ENCODE measurements at regions of chr11 and their contacts with region 1.

Region 1: GRCh38 chr11:31022080-31022479 is 347.5 kb downstream of the DCDC1 start:
- DNase-seq: no peak
- H3K4me3 Mint-ChIP-seq: no peak overlapping the region
- H3K27ac Mint-ChIP-seq: no peak overlapping the region
- H3K4me1 Mint-ChIP-seq: no peaks in the 10 kb centered on the region
- H3K27me3 Mint-ChIP-seq: no peaks in the 10 kb centered on the region

Region 2: DNA sequence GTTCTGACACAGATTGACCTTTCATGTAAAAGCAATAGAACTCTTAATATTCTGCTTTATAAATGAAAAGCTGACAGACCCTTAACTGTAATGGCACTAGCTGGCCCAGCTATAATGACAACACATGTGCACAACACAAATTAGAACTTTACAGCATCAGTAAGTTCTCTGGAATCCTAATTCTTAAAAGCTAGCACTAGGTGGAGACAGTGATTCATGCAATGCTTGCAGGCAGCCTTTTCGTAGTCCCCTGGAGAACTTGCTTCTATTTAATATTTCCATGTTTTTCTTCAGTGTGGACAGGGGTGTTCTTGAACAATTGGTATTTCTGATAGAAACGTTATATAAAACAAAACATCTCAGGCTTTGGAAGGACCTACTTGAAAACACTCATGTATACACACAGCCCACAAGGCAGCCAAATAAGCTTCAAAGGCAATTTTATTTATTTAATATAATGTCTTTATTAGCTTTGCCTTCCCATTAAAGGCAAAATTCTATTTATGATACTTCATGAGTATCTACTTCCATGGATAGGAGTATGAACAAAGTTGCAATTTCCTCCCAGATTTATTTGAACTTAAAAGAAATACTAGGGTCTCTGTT is 61.6 kb before region 1 on chr11:
- CTCF ChIA-PET with region 1: no interaction called
- intact Hi-C with region 1: loop called (anchors 10 kb)
- DNase-seq: no peak
- H3K4me3 Mint-ChIP-seq: no peak overlapping the region
- H3K27ac Mint-ChIP-seq: no peak overlapping the region
- H3K4me1 Mint-ChIP-seq: no peaks in the 10 kb centered on the region
- H3K27me3 Mint-ChIP-seq: no peaks in the 10 kb centered on the region